ENCODE measurements at regions of chr2 and their contacts with region 1.

Region 1: GRCh38 chr2:12716282-12717190 is at the start of gene TRIB2:
- DNase-seq: peak; percentile 86 to 95 (median 90)
- H3K4me3 ChIP-seq: peak within 1 kb of the TSS; percentile 80
- H3K4me3 Mint-ChIP-seq: peak within 1 kb of the TSS; percentile 93 to 100 (median 100)
- H3K27ac ChIP-seq: peak within 1 kb of the TSS; percentile 83
- H3K27ac Mint-ChIP-seq: peak within 1 kb of the TSS; percentile 87 to 100 (median 98)
- H3K4me1 ChIP-seq: peaks cover 36% of the 10 kb centered on the region
- H3K4me1 Mint-ChIP-seq: peaks cover 46 to 63% (median 48%) of the 10 kb centered on the region in 3 donors
- H3K27me3 ChIP-seq: no peaks in the 10 kb centered on the region
- H3K27me3 Mint-ChIP-seq: peaks cover 0 to 2% of the 10 kb centered on the region in 2 donors
- total RNA-seq, gene TRIB2: 9.4 to 9.6 TPM

Region 2: DNA sequence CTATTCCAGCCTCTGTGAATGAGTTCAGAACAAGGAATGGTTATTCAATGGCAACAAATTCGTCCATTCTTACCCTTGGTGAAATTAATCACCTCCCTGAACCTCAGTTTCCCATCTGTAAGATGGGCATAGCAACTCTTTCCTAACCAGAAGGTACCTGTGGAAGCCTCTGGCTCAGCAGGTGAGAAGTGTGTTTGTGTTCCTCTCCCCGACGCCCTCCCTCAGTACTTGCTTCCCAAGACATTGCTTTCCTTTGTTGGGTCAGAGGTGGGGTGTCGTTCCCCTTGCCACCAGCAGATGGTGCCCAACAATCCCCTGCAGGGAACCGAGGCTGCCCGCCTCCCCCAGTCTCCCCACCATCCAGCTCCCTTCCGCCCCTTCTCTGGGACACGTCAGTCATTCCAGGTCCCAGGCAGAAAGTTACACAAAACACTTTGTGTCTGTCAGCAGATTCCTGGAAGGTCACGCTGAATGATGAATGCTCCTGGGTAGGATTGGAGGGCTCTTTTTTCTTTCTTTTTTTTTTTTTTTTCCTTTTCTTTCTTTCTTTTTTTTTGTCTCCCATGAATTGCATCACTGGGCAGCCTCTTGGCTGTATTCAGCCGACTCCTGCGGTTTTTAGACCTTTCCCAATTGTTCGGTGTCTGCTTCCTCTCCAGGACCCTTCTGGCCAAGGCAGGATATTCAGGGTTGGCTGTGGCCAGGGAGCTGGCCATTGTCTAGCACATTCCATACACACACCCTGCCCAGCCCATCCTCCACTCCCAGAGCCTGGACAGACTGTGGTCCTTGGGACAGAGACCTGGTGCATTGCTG is 852.8 kb before region 1 on chr2:
- CTCF ChIA-PET with region 1: interaction called, 11 read pairs
- POLR2A ChIA-PET with region 1: no interaction called
- DNase-seq: peak; percentile 50 to 73 (median 57)
- H3K4me3 ChIP-seq: peak overlapping the region; percentile 2
- H3K4me3 Mint-ChIP-seq: peak overlapping the region; percentile 28 to 72 (median 44)
- H3K27ac ChIP-seq: no peak overlapping the region
- H3K27ac Mint-ChIP-seq: no peak overlapping the region
- H3K4me1 ChIP-seq: peaks cover 7% of the 10 kb centered on the region
- H3K4me1 Mint-ChIP-seq: peaks cover 5 to 21% (median 11%) of the 10 kb centered on the region in 3 donors
- H3K27me3 ChIP-seq: no peaks in the 10 kb centered on the region
- H3K27me3 Mint-ChIP-seq: peaks cover 0 to 4% of the 10 kb centered on the region in 2 donors

Region 3: GRCh38 chr2:12430407-12431133 is 286.0 kb before region 1 on chr2:
- CTCF ChIA-PET with region 1: interaction called, 19 read pairs
- POLR2A ChIA-PET with region 1: interaction called, 11 read pairs
- DNase-seq: no peak
- H3K4me3 ChIP-seq: peak overlapping the region; percentile 30
- H3K4me3 Mint-ChIP-seq: peak overlapping the region; percentile 68 to 86 (median 83)
- H3K27ac ChIP-seq: no peak overlapping the region
- H3K27ac Mint-ChIP-seq: peak overlapping the region; percentile 24 to 74 (median 49)
- H3K4me1 ChIP-seq: peaks cover 18% of the 10 kb centered on the region
- H3K4me1 Mint-ChIP-seq: peaks cover 15 to 29% (median 21%) of the 10 kb centered on the region in 3 donors
- H3K27me3 ChIP-seq: no peaks in the 10 kb centered on the region
- H3K27me3 Mint-ChIP-seq: no peaks in the 10 kb centered on the region

Region 4: DNA sequence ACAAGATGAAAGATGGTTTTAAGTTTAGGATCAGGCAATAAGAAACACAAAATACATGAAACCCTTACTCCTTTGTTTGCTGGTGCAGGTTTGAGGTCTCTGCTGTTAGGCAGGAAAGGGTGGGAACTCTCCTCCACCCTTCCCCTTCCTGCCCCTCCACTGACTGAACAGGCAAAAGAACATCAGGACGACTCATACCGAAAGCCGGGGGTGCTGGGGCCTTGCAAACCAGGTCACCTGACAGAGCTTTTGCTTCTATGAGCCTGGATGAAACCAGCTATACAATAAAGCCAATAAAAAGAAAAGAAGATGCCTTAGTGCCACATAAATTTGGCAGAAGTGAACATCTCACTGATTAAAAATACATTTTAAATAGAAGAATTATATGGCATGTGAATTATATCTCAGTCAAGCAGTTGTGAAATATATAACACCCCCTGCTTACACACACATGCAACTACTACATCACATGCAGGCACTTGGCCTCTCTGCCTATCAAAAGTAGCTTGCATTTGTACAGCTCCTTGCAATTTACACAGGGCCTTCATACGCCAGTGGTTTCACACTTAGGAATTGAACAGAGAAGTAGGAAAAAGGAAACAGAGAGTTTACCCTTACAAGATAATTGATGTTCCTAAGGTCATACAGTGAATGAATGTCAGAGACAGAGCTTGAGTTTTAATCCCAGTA is 214.9 kb before region 1 on chr2:
- CTCF ChIA-PET with region 1: interaction called, 10 read pairs
- POLR2A ChIA-PET with region 1: interaction called, 3 read pairs
- DNase-seq: peak; percentile 29 to 67 (median 51)
- H3K4me3 ChIP-seq: peak overlapping the region; percentile 32
- H3K4me3 Mint-ChIP-seq: peak overlapping the region; percentile 27 to 88 (median 69)
- H3K27ac ChIP-seq: no peak overlapping the region
- H3K27ac Mint-ChIP-seq: peak overlapping the region; percentile 78 to 98 (median 91)
- H3K4me1 ChIP-seq: peaks cover 98% of the 10 kb centered on the region
- H3K4me1 Mint-ChIP-seq: peaks cover 92 to 99% (median 97%) of the 10 kb centered on the region in 3 donors
- H3K27me3 ChIP-seq: no peaks in the 10 kb centered on the region
- H3K27me3 Mint-ChIP-seq: peaks cover 0 to 1% of the 10 kb centered on the region in 2 donors

Region 5: DNA sequence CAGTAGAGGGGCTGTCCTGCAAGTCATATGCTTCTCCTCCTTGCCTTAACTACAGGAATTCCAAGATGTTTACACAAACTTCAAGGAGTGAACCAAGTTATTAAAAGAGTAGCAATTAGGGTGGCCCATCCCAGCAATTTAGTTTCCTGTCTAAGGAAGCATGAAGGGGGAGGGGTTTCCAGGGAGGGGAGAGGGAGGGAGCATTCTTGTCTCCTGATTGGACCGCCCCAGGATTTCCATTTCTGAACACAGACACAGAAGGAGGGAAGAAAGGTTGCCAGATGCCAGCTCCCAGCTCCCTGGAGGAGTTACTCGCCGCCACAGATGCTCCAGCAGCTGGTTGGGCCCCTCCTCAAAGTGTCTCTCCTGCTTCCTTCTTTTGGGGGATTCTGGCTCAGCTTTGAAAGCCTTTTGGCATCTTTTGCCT is 107.8 kb after region 1 on chr2:
- CTCF ChIA-PET with region 1: no interaction called
- POLR2A ChIA-PET with region 1: no interaction called
- DNase-seq: no peak
- H3K4me3 ChIP-seq: no peak overlapping the region
- H3K4me3 Mint-ChIP-seq: no peak overlapping the region
- H3K27ac ChIP-seq: no peak overlapping the region
- H3K27ac Mint-ChIP-seq: no peak overlapping the region
- H3K4me1 ChIP-seq: peaks cover 6% of the 10 kb centered on the region
- H3K4me1 Mint-ChIP-seq: peaks cover 7 to 11% (median 7%) of the 10 kb centered on the region in 3 donors
- H3K27me3 ChIP-seq: no peaks in the 10 kb centered on the region
- H3K27me3 Mint-ChIP-seq: peaks cover 0 to 6% of the 10 kb centered on the region in 2 donors

Region 6: DNA sequence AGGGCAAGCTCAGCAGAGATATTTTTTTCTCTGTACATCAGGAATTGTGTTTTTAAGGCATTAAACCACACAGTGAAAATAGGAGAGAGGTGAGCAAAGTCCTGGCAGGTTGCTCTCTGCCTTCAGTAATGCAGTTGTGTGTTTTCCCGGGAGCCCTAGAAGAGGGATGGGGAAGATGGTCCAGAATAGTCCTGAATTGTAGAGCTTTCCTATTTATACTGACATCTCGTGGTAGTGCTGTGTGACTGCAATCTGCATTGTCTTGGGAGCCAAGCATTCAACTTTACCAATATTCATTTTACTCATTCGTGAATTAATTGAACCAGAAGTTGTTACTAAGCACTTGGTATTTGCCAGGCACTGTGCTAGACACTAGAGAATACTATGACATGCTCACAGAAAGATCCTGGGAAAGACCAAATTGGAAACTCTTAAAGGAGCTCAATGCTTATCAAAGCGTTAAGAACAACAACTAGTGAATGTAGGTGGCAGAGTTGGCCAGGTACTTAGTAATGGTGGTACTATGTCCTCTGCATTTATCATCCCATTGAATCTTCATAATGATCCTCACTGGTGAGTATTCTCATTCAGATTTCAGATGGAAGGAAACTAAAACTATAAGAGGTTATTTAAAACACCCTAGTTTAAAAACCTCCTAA is 214.8 kb after region 1 on chr2:
- CTCF ChIA-PET with region 1: interaction called, 45 read pairs
- POLR2A ChIA-PET with region 1: interaction called, 9 read pairs
- DNase-seq: peak in 1 of 5 donors; percentile 25
- H3K4me3 ChIP-seq: no peak overlapping the region
- H3K4me3 Mint-ChIP-seq: no peak overlapping the region
- H3K27ac ChIP-seq: no peak overlapping the region
- H3K27ac Mint-ChIP-seq: no peak overlapping the region
- H3K4me1 ChIP-seq: no peaks in the 10 kb centered on the region
- H3K4me1 Mint-ChIP-seq: peaks cover 5 to 15% (median 7%) of the 10 kb centered on the region in 3 donors
- H3K27me3 ChIP-seq: no peaks in the 10 kb centered on the region
- H3K27me3 Mint-ChIP-seq: peaks cover 0 to 1% of the 10 kb centered on the region in 2 donors

Region 7: GRCh38 chr2:13006829-13007717 is 290.5 kb after region 1 on chr2:
- CTCF ChIA-PET with region 1: interaction called, 35 read pairs
- POLR2A ChIA-PET with region 1: interaction called, 3 read pairs
- DNase-seq: peak; percentile 40 to 66 (median 53)
- H3K4me3 ChIP-seq: no peak overlapping the region
- H3K4me3 Mint-ChIP-seq: no peak overlapping the region
- H3K27ac ChIP-seq: no peak overlapping the region
- H3K27ac Mint-ChIP-seq: no peak overlapping the region
- H3K4me1 ChIP-seq: no peaks in the 10 kb centered on the region
- H3K4me1 Mint-ChIP-seq: peaks cover 2 to 4% (median 3%) of the 10 kb centered on the region in 3 donors
- H3K27me3 ChIP-seq: no peaks in the 10 kb centered on the region
- H3K27me3 Mint-ChIP-seq: peaks cover 2 to 14% of the 10 kb centered on the region in 2 donors